Activated T-helper 2 cell treated with anti-CD3 and anti-CD28 coated beads, Interferon-gamma antibody, Interleukin-2, Interleukin-4, amounts not matched to agents 10 μg/mL and 5 μg/mL and 100 μg/mL, durations not matched to agents 14 hours and 24 hours and 36 hours (primary cell): ENCODE measurements at regions of chr2 and their contacts with region 1.

Region 1: DNA sequence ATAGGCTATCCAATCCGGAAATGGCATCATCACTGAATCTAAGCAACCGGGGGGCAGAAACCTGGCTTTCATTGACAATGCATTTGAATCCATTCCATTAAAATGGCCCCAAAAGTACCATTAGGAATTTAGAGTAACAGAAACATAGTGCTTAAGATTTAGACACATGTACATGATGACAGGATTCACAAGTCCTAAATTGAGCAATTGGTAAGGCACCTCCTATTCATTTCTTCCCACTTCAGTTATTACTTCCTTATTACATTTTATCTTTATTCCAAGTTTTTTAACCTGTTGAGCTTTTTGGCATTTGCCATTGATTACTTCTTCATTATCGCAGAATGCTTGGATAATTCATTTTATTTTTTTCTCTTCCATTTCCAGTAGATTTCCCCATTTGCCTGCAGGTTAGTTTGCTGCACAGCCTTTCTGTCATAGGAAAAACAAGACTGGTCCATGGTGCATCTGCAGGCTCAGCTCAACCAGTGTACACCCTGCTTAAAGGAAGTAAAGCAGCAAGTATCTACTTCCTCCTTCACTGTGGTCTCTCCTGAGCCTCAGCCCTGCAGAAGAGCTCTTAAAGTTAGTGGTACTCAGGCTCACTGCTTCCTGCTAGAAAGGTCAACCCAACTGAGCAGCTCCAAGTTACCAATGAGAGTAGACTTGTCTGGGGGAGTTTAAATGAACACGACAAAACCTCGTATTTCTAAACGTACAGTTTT is 89.2 kb downstream of the DOCK10 start:
- DNase-seq: peak; percentile 35
- H3K4me3 Mint-ChIP-seq: peak overlapping the region; percentile 22
- H3K27ac Mint-ChIP-seq: peak overlapping the region; percentile 79
- H3K4me1 Mint-ChIP-seq: peaks cover 76% of the 10 kb centered on the region
- H3K27me3 Mint-ChIP-seq: no peaks in the 10 kb centered on the region

Region 2: DNA sequence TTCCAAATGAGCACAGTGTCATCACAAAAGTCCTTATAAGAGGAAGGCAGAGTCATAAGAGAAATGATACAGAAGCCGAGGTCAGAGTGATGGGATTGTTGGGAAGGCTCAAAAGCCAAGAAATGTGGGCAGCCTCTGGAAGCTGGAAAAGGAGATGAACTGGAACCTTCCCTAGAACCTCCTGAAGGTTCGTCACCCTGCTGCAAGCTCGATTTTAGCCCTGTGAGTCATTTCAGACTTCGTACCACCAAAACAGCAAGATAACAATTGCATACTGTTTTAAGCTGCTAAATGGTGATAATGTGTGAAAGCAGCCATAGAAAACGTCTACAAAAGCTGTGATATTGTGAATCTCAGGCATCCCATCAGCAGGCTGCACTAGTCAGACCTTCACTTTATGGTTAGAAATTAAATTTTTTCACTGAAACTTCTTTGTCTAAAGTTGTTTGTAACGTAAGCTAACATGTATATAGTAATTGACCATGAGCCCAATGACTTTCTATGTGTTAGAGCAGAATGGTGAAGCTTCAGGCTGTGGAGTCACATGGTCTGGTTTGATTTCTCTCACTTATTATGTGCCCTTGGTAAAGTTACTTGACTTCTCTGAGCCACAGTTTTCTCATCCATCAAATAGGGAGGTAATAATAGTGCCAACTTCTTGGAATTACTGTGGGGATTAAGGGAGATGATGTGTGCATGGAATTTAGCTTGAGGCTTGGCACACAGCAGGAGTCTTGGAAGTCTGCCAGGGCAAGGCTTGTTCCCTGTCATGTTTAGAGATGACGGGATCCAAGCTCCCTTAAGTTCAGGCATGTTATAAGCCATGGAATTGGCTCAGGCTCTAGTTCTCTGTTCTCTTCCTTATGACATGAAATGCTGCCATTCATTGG is 104.9 kb before region 1 on chr2:
- intact Hi-C with region 1: no loop called
- DNase-seq: no peak
- H3K4me3 Mint-ChIP-seq: no peak overlapping the region
- H3K27ac Mint-ChIP-seq: no peak overlapping the region
- H3K4me1 Mint-ChIP-seq: peaks cover 8% of the 10 kb centered on the region
- H3K27me3 Mint-ChIP-seq: no peaks in the 10 kb centered on the region

Region 3: DNA sequence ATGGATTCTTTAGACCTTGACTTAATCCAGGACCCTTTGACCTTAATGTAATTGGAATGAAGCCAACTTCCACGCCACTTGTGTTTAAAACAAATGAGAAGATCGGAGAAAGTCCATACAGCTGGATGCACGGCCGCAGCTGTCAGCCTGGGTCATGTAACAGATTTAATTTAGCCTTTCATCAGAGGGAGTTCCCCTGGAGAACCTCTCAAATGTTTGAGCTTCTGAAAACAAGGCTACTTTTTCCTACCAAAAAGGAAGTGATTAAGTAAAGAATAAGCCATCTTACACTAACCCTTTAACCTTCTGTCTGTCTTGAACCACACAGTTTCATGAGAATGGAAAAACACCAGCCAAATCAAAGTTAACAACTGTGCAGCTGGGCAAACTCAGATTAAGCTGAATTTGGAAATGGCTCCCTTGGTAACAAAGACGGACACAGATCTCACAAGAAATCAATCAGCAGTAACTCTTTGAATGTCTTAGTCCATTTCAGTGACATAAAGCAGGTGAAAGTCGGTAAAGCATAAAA is 14.4 kb before region 1 on chr2:
- intact Hi-C with region 1: loop called (anchors 2 kb)
- DNase-seq: no peak
- H3K4me3 Mint-ChIP-seq: peak overlapping the region; percentile 62
- H3K27ac Mint-ChIP-seq: peak overlapping the region; percentile 80
- H3K4me1 Mint-ChIP-seq: peaks cover 74% of the 10 kb centered on the region
- H3K27me3 Mint-ChIP-seq: no peaks in the 10 kb centered on the region

Region 4: GRCh38 chr2:224969633-224970260 is 16.6 kb after region 1 on chr2:
- intact Hi-C with region 1: loop called (anchors 2 kb)
- DNase-seq: no peak
- H3K4me3 Mint-ChIP-seq: no peak overlapping the region
- H3K27ac Mint-ChIP-seq: peak overlapping the region; percentile 62
- H3K4me1 Mint-ChIP-seq: peaks cover 50% of the 10 kb centered on the region
- H3K27me3 Mint-ChIP-seq: no peaks in the 10 kb centered on the region

Region 5: GRCh38 chr2:224982910-224983711 is 30.0 kb after region 1 on chr2:
- intact Hi-C with region 1: loop called (anchors 2 kb)
- DNase-seq: no peak
- H3K4me3 Mint-ChIP-seq: peak overlapping the region; percentile 37
- H3K27ac Mint-ChIP-seq: peak overlapping the region; percentile 90
- H3K4me1 Mint-ChIP-seq: peaks cover 62% of the 10 kb centered on the region
- H3K27me3 Mint-ChIP-seq: no peaks in the 10 kb centered on the region

Region 6: DNA sequence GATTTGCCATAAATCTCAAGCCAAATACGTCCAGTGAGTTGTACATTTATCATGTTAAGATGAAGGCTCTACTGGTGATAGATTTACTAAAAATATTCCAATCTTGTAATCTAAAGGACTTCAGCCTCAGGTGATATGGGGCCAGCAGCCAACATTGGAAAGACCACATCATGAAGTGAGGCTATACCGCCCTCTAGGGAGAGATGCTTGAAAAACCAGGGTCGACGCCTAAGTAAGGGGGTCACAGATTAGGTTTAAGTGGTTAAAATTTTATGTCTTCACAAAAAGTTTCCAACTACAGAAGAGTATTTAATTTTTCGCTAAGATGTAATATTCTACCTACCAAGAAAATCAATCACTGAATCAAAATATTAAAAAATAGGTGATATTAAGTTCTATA is 55.8 kb after region 1 on chr2:
- intact Hi-C with region 1: no loop called
- DNase-seq: no peak
- H3K4me3 Mint-ChIP-seq: peak overlapping the region; percentile 6
- H3K27ac Mint-ChIP-seq: peak overlapping the region; percentile 53
- H3K4me1 Mint-ChIP-seq: peaks cover 89% of the 10 kb centered on the region
- H3K27me3 Mint-ChIP-seq: no peaks in the 10 kb centered on the region